Activated CD8-positive, alpha-beta T cell treated with anti-CD3 and anti-CD28 coated beads for 36 hours (primary cell): ENCODE measurements at regions of chr2 and their contacts with region 1.

Region 1: DNA sequence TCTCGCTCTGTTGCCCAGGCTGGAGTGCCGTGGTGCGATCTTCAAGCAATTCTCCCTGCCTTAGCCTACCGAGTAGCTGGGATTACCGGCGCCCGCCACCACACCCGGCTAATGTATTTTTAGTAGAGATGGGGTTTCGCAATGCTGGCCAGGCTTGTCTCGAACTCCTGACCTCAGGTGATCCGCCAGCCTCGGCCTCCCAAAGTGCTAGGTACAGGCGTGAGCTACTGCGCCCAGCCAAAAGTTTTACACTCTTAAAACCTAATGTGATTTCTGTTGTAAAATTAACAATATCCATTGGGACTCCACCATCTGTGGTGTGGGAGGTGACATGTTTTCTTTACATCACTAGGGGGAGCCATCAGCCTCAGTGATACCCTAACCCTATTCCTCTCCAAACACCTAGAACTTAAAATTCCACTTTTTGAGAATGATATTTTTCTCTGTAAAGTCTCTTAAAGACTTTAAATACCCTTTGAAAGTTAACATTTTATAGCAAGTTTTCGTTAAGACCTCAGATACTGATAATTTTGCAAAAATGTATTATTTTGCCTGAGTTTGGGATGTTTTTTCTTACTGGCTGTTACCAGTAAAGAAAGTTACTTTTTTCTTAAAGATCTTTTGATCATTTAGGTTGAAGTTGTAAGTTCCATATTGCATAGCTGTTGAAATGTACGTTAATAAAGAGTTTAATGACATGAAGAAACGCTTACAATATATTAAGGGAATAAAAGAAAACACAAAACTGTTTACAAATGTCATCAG is 11.6 kb upstream of the EIF2AK2 start:
- DNase-seq: peak; percentile 47
- ATAC-seq: peak; percentile 75
- H3K4me3 Mint-ChIP-seq: no peak overlapping the region
- H3K27ac Mint-ChIP-seq: no peak overlapping the region
- H3K4me1 Mint-ChIP-seq: no peaks in the 10 kb centered on the region
- H3K27me3 Mint-ChIP-seq: no peaks in the 10 kb centered on the region
- CTCF ChIP-seq: peak; percentile 85

Region 2: DNA sequence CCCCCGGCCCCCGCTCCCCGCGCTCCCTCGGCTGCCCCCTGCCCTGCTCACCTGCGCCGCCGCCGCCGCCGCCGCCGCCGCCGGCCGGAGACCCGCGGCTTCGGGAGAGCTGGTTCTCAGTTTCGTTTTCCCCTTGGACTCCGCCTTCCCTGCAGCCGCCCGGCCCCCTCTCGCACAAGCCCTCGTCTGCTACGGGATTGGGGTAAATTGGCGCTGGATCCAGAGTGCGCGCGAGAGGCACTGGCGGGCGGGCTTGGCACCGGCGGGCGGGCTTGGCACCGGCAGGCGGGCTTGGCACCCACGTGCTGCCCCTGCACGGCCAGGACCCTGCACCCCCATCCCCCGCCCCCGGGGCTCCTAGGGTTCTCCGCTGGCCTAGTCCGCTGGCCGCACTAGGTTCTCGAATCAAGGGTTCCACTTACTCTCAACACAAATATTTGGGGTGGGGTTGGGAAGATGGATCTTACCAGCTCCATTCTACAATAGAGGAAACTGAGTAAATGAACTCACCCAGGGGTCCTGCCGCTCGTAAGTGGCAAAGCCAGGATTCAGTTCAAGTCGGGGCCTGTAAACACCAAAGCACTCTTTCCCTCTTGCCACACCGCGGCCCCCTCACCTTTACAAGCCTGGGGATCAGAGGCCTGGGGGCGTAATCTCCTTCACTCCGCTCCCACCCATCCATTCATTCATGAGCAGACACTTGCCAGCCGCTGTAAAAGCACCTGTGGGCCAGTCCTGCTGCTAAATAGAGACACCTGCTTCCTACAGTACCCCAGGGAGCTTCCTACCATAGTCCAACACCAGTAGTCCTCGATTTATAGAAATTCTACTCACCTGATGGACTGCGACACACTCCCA is 11.3 kb before region 1 on chr2 and contains the start of gene EIF2AK2:
- CTCF ChIA-PET with region 1: interaction called, 11 read pairs
- POLR2A ChIA-PET with region 1: interaction called, 6 read pairs
- intact Hi-C with region 1: no loop called
- DNase-seq: peak; percentile 89
- ATAC-seq: peak; percentile 94
- H3K4me3 Mint-ChIP-seq: peak within 1 kb of the TSS; percentile 93
- H3K27ac Mint-ChIP-seq: peak within 1 kb of the TSS; percentile 92
- H3K4me1 Mint-ChIP-seq: peaks cover 39% of the 10 kb centered on the region
- H3K27me3 Mint-ChIP-seq: no peaks in the 10 kb centered on the region
- CTCF ChIP-seq: no peak
- total RNA-seq, gene EIF2AK2: 43.1 to 49.3 TPM

Region 3: DNA sequence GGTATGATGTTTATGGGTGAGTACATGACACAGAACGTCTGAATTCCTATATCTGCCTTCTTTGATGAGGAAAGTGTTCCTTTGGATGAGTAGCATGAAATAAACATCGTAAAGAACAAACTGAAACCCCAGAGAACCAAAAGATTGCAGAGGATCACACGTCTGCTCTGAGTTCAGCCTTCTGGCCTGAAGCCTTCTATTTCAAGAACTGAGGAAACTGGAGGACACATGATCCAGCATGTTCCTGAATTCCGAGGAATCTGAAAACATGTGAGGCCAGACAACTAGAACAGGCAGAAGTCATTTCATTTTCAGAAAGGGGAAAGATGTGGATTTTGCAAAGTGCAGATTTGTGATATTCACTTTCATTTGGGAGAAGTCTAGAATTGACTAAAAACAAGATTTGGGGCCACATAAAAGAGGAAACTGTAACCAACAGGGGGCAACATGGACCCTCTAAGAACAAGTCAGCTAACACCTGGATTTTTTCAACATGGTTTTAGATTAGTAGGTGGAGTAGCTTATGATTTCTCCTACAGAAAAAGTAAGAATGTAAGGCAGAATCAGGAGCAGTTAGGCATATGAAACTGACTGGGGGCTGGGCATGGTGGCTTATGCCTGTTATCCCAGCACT is 11.7 kb after region 1 on chr2:
- CTCF ChIA-PET with region 1: interaction called, 22 read pairs
- POLR2A ChIA-PET with region 1: no interaction called
- intact Hi-C with region 1: no loop called
- DNase-seq: no peak
- ATAC-seq: no peak
- H3K4me3 Mint-ChIP-seq: no peak overlapping the region
- H3K27ac Mint-ChIP-seq: no peak overlapping the region
- H3K4me1 Mint-ChIP-seq: peaks cover 5% of the 10 kb centered on the region
- H3K27me3 Mint-ChIP-seq: peaks cover 8% of the 10 kb centered on the region
- CTCF ChIP-seq: no peak